ENCODE measurements at regions of chr5 and their contacts with region 1.

Region 1: DNA sequence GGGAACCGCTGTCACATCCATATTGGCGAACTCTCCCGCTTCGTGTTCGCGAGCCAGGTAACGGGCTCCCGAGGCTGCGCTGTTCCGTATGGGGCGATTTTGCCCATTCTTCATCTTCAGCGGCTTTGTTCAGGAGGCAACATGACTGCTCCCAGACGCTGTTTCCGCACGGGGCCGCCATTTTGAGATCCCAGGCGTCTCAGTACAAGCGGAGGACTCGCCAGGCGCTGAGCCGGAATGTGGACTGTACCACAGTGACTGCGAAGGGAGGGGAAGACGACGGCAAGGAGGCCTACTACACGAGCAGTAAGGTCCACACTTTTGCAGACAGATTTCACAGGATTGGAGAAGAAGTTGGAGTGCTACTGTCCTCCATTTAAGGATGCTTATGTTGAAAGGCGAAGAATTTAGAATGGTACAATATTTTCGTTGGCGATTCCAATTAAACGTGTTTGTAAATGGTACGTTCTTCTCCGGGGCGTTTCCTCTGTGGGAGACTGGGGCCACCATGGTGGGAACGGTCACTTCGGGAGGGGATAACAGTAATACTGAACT is 41.6 kb upstream of the ZNF300 start:
- DNase-seq: peak; percentile 52 to 95 (median 78)

Region 2: DNA sequence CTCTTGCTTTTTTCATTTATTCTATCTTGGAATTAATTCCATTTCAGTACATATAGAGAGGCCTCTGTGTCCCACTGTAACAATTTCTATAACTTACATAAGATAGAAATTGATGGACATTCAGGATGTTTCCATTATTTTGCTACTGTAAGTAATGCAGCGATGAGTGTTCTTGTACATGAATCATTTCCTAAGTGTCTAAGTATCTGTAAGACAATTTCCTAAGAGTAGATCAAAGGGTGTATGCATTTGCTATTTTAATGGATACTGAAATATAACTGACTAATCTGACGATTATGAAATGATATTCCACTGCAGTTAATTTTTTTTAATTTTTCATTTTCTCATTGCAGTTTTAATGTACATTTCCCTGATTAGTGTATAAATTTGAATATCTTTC is 222.6 kb before region 1 on chr5:
- intact Hi-C with region 1: no loop called
- DNase-seq: no peak

Region 3: GRCh38 chr5:150904479-150905318 is 41.7 kb before region 1 on chr5 and contains the start of gene ZNF300:
- intact Hi-C with region 1: loop called (anchors 2 kb)
- DNase-seq: peak; percentile 81 to 98 (median 90)

Measured in posterior cingulate gyrus (tissue), 11 donors.